ENCODE measurements at regions of chr12 and their contacts with region 1.

Region 1: GRCh38 chr12:110224379-110225304 is 56.4 kb upstream of the ATP2A2 start:
- DNase-seq: peak in 1 of 2 donors; percentile 64
- H3K4me3 ChIP-seq: peak overlapping the region; percentile 24 to 29
- H3K27ac ChIP-seq: peak overlapping the region; percentile 72 to 78
- H3K4me1 ChIP-seq: peaks cover 0 to 52% (median 24%) of the 10 kb centered on the region in 4 donors
- H3K27me3 ChIP-seq: no peaks in the 10 kb centered on the region
- CTCF ChIP-seq: peak; percentile 71 to 77

Region 2: GRCh38 chr12:110100315-110100970 is 124.2 kb before region 1 on chr12:
- intact Hi-C with region 1: loop called (anchors 2 kb)
- DNase-seq: peak; percentile 63 to 78
- H3K4me3 ChIP-seq: no peak overlapping the region
- H3K27ac ChIP-seq: peak overlapping the region; percentile 59 to 76
- H3K4me1 ChIP-seq: peaks cover 0 to 34% (median 12%) of the 10 kb centered on the region in 4 donors
- H3K27me3 ChIP-seq: peaks cover 0 to 2% of the 10 kb centered on the region in 2 donors
- CTCF ChIP-seq: peak; percentile 81 to 95

Region 3: DNA sequence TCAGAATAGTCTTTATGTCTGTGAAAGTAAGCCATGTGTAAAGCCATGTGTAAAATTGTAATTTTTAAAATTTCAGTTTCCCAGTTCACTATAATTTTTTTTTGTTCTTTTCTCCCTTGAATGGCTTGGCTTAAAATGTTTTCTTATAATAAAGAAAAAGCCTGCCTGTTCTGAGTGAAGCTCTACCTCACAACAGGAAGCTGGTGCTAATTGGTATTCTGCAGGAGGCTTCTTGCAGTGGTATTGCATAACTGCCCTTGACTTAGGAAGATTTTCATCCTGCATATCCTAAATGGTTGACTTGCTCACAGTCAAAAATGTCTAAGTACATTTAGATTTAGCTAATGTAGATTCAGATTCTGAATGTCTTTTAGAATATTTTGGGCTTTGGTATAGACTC is 105.9 kb after region 1 on chr12:
- intact Hi-C with region 1: no loop called
- DNase-seq: no peak
- H3K4me3 ChIP-seq: no peak overlapping the region
- H3K27ac ChIP-seq: no peak overlapping the region
- H3K4me1 ChIP-seq: peaks cover 0 to 37% (median 8%) of the 10 kb centered on the region in 4 donors
- H3K27me3 ChIP-seq: no peaks in the 10 kb centered on the region
- CTCF ChIP-seq: no peak